ENCODE measurements at regions of chr1 and their contacts with region 1.

Region 1: DNA sequence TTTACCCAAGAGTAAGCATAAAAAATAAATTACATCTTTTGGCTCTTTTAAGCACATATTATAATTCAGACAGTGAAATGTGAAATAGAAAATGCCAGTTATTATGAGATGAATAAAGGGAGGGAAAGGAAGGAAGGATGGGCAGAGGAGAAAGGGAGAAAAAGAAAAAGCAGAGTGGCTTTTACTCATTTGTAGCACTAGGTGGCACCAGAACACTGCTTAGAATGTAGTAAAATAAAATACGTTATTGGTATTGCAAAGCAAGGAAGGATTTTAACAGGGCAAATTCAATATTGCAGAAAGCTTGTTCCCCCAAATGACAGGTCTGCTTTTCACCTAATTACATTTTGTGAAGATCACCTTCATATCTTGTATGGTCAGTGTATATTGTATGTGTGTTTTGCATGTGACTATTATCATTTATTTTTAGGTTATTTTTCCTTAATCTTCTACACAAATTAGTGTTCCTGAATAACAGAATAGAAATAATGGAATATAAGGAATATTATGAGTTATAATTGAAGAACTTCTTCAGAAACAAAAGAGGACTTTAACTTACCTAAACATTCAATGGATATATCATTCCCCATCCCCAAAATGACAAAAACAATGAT is 9.1 kb upstream of the PCNX2 start:
- DNase-seq: no peak
- H3K4me3 ChIP-seq: no peak overlapping the region
- CTCF ChIP-seq: peak; percentile 59

Region 2: DNA sequence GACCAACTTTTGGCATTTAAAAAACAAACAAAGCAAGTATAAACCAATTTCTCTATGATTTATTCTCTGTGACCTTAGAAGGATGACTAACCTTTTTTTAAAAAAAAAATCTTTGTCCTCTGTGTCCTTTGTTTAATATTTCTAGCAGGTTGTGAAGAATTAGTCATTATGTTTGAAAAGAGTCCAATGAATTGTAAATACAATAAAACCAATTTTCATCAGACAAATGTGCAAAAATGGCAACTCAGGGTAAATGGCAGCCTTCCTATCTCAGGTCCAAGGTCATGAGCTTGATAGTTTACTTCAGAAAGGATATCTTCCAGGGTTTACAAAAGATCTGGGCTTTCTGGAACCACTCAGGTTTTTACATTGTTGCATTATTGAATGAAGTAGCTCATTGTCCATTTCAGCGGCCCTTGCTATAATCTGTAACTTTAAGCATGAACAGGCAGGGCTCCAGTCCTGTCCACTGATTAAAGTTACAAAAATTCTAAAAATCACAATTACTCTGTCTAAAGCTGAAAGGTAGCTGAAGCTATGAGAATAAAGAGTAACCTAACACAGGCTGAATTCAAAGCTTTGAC is 11.2 kb after region 1 on chr1:
- CTCF ChIA-PET with region 1: interaction called, 21 read pairs
- POLR2A ChIA-PET with region 1: no interaction called
- DNase-seq: no peak
- H3K4me3 ChIP-seq: no peak overlapping the region
- CTCF ChIP-seq: no peak

Measured in AG04449 (cell line).